ENCODE measurements at regions of chr7 and their contacts with region 1.

Region 1: DNA sequence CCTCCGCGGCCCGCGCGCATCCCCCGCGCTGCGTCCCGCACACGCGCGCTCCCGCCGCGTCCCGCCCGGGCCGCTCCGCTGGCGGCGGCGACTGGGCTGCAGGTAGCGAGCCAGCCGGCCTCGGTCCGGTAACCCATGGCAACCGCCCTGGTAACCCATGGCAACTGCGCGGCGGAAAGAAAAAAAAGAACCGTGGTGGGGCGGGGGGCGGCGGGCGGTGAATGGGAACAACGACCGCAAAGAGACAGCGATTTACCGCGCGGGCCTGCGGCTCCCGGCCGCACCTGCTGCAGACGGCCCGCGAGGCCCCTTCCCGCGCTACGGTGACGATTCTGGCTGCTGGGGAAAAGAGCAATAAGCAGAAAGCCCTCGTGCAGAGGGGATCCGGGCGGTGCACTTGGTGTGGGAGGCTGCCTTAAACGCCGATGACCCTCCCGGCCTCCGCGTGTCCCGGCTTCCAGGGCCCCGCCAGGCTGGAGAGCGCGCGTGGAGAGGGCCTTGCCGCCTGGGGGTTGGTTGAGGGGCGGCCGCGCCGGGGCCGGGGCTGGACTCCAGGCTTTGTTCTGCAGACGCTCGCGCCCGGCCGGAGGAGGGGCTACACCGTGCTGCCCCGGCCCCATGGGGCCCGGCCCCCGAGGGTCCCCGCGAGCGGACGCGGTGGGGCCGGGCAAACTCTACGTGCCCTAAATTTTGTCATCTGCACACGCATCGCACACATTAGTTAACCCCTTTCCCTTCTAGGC is 84.7 kb downstream of the SNX10 start:
- DNase-seq: peak in 4 of 5 donors; percentile 21 to 59 (median 31)
- H3K4me3 ChIP-seq: peak overlapping the region; percentile 57
- H3K4me3 Mint-ChIP-seq: peak overlapping the region; percentile 77 to 94 (median 86)
- H3K27ac ChIP-seq: no peak overlapping the region
- H3K27ac Mint-ChIP-seq: peak overlapping the region in 2 of 8 donors; percentile 22 to 89
- H3K4me1 ChIP-seq: peaks cover 5% of the 10 kb centered on the region
- H3K4me1 Mint-ChIP-seq: peaks cover 0 to 10% (median 5%) of the 10 kb centered on the region in 3 donors
- H3K27me3 ChIP-seq: peaks cover 10% of the 10 kb centered on the region
- H3K27me3 Mint-ChIP-seq: peaks cover 8 to 45% of the 10 kb centered on the region in 2 donors

Region 2: GRCh38 chr7:26365077-26365900 is 11.1 kb before region 1 on chr7:
- CTCF ChIA-PET with region 1: interaction called, 13 read pairs
- POLR2A ChIA-PET with region 1: no interaction called
- DNase-seq: peak in 4 of 5 donors; percentile 12 to 62 (median 58)
- H3K4me3 ChIP-seq: no peak overlapping the region
- H3K4me3 Mint-ChIP-seq: no peak overlapping the region
- H3K27ac ChIP-seq: no peak overlapping the region
- H3K27ac Mint-ChIP-seq: peak overlapping the region in 3 of 8 donors; percentile 52 to 92 (median 79)
- H3K4me1 ChIP-seq: peaks cover 7% of the 10 kb centered on the region
- H3K4me1 Mint-ChIP-seq: peaks cover 7 to 12% (median 8%) of the 10 kb centered on the region in 3 donors
- H3K27me3 ChIP-seq: no peaks in the 10 kb centered on the region
- H3K27me3 Mint-ChIP-seq: no peaks in the 10 kb centered on the region

Region 3: DNA sequence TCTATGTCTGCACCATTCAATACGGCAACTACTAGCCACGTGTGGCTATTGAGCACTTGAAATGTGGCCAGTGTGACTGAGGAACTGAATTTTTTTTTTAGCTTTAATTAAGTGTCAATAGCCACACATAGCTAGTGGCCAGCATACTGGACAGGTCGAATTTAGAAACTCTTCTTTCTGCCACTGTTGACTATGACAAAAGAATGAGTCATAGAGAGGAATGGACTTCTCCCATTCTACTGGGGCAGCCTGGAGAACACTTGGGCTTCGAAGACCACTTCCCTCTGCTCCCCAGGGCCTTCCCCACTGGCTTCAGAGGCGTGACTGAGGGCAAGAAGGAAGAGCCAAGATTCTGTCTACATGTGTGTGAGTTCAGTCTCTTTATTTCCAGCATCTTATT is 52.8 kb after region 1 on chr7:
- CTCF ChIA-PET with region 1: no interaction called
- POLR2A ChIA-PET with region 1: no interaction called
- DNase-seq: no peak
- H3K4me3 ChIP-seq: no peak overlapping the region
- H3K4me3 Mint-ChIP-seq: no peak overlapping the region
- H3K27ac ChIP-seq: no peak overlapping the region
- H3K27ac Mint-ChIP-seq: no peak overlapping the region
- H3K4me1 ChIP-seq: no peaks in the 10 kb centered on the region
- H3K4me1 Mint-ChIP-seq: no peaks in the 10 kb centered on the region
- H3K27me3 ChIP-seq: no peaks in the 10 kb centered on the region
- H3K27me3 Mint-ChIP-seq: peaks cover 9 to 43% of the 10 kb centered on the region in 2 donors